Activated naive CD4-positive, alpha-beta T cell treated with anti-CD3 and anti-CD28 coated beads, Interleukin-2, amount 10 ng/mL, durations not matched to agents 7 days and 5 days (primary cell): ENCODE measurements at regions of chr11 and their contacts with region 1.

Region 1: DNA sequence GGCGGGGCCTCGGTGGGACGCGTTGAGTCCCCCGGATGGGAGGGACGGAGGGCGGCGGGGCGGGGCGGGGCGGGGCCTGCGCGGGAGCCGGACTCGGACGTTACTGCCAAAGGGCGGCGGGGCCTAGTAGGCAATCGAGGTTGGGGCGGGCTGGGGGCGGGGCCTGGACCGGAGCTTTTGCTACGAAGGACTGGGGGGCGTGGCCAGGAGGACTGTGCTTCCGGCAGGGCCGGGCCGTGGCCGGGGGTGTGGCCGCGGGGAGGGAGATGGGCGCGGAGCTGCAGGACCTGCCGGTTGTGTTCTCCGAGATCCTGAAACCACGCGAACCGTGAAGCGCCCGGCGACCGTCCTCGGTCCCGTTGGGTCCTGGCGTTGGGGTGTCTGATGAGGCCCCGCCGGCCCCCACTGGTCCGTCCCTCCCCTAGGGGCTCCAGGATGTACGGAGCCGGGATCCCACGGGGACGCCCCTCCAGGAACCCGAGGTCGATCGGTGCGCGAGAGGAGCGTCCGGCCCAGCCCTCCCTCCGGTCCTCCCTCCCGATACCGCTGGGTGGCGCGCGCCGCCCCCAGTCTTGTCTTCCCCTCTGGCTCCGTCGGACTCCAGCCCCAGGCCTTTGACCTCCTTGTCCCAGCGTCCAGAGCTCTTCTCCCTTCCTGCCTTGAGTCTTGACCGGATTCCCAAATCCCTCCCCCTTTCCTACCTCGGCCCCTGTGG is 648 bp upstream of the NUDT8 start:
- DNase-seq: peak; percentile 98
- H3K4me3 Mint-ChIP-seq: peak overlapping the region; percentile 86
- H3K27ac Mint-ChIP-seq: peak overlapping the region; percentile 95
- H3K4me1 Mint-ChIP-seq: peaks cover 20% of the 10 kb centered on the region
- H3K27me3 Mint-ChIP-seq: peaks cover 15% of the 10 kb centered on the region

Region 2: GRCh38 chr11:67548633-67549032 is 81.8 kb before region 1 on chr11:
- CTCF ChIA-PET with region 1: no interaction called
- DNase-seq: no peak
- H3K4me3 Mint-ChIP-seq: no peak overlapping the region
- H3K27ac Mint-ChIP-seq: no peak overlapping the region
- H3K4me1 Mint-ChIP-seq: no peaks in the 10 kb centered on the region
- H3K27me3 Mint-ChIP-seq: peaks cover 53% of the 10 kb centered on the region

Region 3: GRCh38 chr11:67613960-67614715 is 16.2 kb before region 1 on chr11:
- CTCF ChIA-PET with region 1: interaction called, 36 read pairs
- DNase-seq: peak; percentile 89
- H3K4me3 Mint-ChIP-seq: peak overlapping the region; percentile 67
- H3K27ac Mint-ChIP-seq: peak overlapping the region; percentile 98
- H3K4me1 Mint-ChIP-seq: peaks cover 37% of the 10 kb centered on the region
- H3K27me3 Mint-ChIP-seq: peaks cover 14% of the 10 kb centered on the region

Region 4: GRCh38 chr11:67648140-67649123 is 18.0 kb after region 1 on chr11:
- CTCF ChIA-PET with region 1: interaction called, 91 read pairs
- DNase-seq: peak; percentile 73
- H3K4me3 Mint-ChIP-seq: no peak overlapping the region
- H3K27ac Mint-ChIP-seq: peak overlapping the region; percentile 58
- H3K4me1 Mint-ChIP-seq: peaks cover 52% of the 10 kb centered on the region
- H3K27me3 Mint-ChIP-seq: peaks cover 45% of the 10 kb centered on the region

Region 5: GRCh38 chr11:67656278-67656922 is 26.0 kb after region 1 on chr11:
- CTCF ChIA-PET with region 1: interaction called, 91 read pairs
- DNase-seq: no peak
- H3K4me3 Mint-ChIP-seq: no peak overlapping the region
- H3K27ac Mint-ChIP-seq: no peak overlapping the region
- H3K4me1 Mint-ChIP-seq: peaks cover 4% of the 10 kb centered on the region
- H3K27me3 Mint-ChIP-seq: peaks cover 22% of the 10 kb centered on the region

Region 6: GRCh38 chr11:67685641-67686495 is 55.5 kb after region 1 on chr11:
- CTCF ChIA-PET with region 1: no interaction called
- DNase-seq: no peak
- H3K4me3 Mint-ChIP-seq: no peak overlapping the region
- H3K27ac Mint-ChIP-seq: no peak overlapping the region
- H3K4me1 Mint-ChIP-seq: peaks cover 2% of the 10 kb centered on the region
- H3K27me3 Mint-ChIP-seq: peaks cover 47% of the 10 kb centered on the region